Ascending aorta (tissue), 2 donors: ENCODE measurements at regions of chr12 and their contacts with region 1.

Region 1: DNA sequence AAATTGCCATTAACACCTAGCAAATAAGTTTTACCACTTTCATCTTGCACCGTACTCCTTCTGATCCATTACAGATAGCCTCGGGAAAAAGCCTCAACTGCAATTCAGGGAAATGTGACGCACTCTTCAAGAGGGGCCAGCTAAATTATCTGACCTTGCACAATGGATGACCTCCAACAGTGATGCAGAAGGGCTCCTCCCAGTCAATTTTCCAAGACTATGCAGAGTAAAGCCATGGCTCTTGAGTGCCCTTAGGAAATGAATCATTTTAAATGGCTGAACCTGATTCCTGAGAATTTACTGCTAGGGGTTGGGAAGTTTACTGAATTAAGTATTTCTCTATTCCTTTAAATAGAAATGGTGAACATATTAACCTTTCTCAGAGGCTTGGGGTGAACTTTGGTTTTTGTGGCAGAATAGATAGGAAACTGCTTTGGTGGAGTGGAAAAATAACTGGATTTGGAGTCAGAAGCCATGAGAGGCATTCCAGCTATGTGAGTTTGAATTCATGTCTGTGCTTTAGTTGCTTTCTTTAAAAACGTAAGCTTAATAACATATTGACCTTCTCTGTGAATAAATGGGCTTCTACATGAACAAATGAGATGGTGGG is 64.8 kb upstream of the OVCH1 start:
- DNase-seq: peak in 1 of 2 donors; percentile 78
- H3K4me3 ChIP-seq: no peak overlapping the region
- H3K27ac ChIP-seq: peak overlapping the region; percentile 56 to 58
- H3K4me1 ChIP-seq: peaks cover 0 to 24% of the 10 kb centered on the region in 2 donors
- H3K27me3 ChIP-seq: no peaks in the 10 kb centered on the region
- CTCF ChIP-seq: no peak

Region 2: GRCh38 chr12:29698756-29699155 is 136.5 kb after region 1 on chr12:
- intact Hi-C with region 1: no loop called
- DNase-seq: no peak
- H3K4me3 ChIP-seq: no peak overlapping the region
- H3K27ac ChIP-seq: no peak overlapping the region
- H3K4me1 ChIP-seq: peaks cover 0 to 6% of the 10 kb centered on the region in 2 donors
- H3K27me3 ChIP-seq: no peaks in the 10 kb centered on the region
- CTCF ChIP-seq: no peak

Region 3: GRCh38 chr12:29957835-29958234 is 395.6 kb after region 1 on chr12:
- intact Hi-C with region 1: loop called (anchors 10 kb)
- DNase-seq: no peak
- H3K4me3 ChIP-seq: no peak overlapping the region
- H3K27ac ChIP-seq: no peak overlapping the region
- H3K4me1 ChIP-seq: peaks cover 0 to 3% of the 10 kb centered on the region in 2 donors
- H3K27me3 ChIP-seq: no peaks in the 10 kb centered on the region
- CTCF ChIP-seq: no peak